H1 (cell line): ENCODE measurements at regions of chr17 and their contacts with region 1.

Region 1: DNA sequence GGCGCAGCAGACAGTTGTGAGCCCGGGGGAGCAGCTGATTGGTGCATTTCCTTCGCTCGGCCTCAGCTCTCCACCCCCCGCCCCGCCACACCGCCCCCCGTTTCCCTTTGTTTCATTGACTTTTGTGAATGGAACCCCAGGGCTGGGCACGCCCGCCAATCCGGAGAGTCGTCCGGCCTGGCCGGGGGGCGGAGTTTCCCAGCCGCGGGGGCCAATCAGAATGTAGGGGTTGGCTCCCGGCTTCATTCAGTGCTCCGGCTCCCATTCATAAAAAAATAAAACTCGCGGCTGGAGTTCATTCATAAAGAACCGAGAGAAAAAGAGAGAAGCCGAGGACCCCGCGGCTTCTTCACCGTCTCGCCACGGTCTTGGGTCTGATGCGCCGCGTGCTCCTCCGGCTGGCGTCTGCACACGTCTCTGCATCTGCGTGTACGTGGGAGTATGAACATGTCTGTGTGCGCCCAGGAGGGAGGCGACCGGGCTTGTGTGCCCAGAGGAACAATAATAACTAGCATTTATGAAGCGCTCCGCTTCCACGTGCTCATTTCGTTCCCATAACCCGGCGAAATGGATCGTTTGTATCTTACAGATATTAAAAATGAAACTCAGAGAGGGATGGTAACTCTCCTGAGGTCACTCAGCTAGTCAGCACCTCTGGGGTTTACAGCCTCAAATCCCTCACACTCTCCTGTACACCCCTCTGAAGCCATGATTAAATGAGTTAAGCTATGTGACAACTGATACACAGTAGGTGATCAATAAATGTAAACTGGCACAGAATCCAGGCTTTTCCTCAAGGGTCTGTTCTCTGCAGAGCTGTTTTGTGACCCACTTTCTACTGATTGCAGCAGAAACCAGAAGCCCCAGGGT is at the start of gene ETV4:
- DNase-seq: peak; percentile 84 to 96
- H3K4me3 ChIP-seq: peak within 1 kb of the TSS; percentile 56 to 71 (median 64)
- H3K27ac ChIP-seq: peak within 1 kb of the TSS; percentile 82; the same call in 1 of the 2 replicates
- H3K4me1 ChIP-seq: peaks cover 24 to 35% (median 30%) of the 10 kb centered on the region in 4 experiments
- H3K27me3 ChIP-seq: peaks cover 0 to 12% (median 7%) of the 10 kb centered on the region in 4 experiments; a peak in 5 of 7 replicates
- CTCF ChIP-seq: no peak
- EP300 ChIP-seq: no peak
- POLR2A ChIP-seq: 0 out of 3 replicates have a peak, but pooled peaks of 1 of the 2 experiments have one; percentile 1
- RAD21 ChIP-seq: no peak
- total RNA-seq, gene ETV4: 137 and 143 TPM in 2 replicates

Region 2: GRCh38 chr17:43477832-43478634 is 68.5 kb before region 1 on chr17:
- CTCF ChIA-PET with region 1: no interaction called
- POLR2A ChIA-PET with region 1: no interaction called
- DNase-seq: no peak
- H3K4me3 ChIP-seq: no peak overlapping the region
- H3K27ac ChIP-seq: no peak overlapping the region
- H3K4me1 ChIP-seq: no peaks in the 10 kb centered on the region; a peak in 2 of 7 replicates
- H3K27me3 ChIP-seq: no peaks in the 10 kb centered on the region
- CTCF ChIP-seq: no peak
- EP300 ChIP-seq: no peak
- POLR2A ChIP-seq: no peak
- RAD21 ChIP-seq: no peak

Region 3: GRCh38 chr17:43517615-43518386 is 28.8 kb before region 1 on chr17:
- CTCF ChIA-PET with region 1: interaction called, 11 read pairs
- POLR2A ChIA-PET with region 1: interaction called, 345 read pairs
- DNase-seq: no peak
- H3K4me3 ChIP-seq: no peak overlapping the region
- H3K27ac ChIP-seq: no peak overlapping the region
- H3K4me1 ChIP-seq: no peaks in the 10 kb centered on the region
- H3K27me3 ChIP-seq: no peaks in the 10 kb centered on the region
- CTCF ChIP-seq: no peak
- EP300 ChIP-seq: no peak
- POLR2A ChIP-seq: no peak
- RAD21 ChIP-seq: no peak

Region 4: DNA sequence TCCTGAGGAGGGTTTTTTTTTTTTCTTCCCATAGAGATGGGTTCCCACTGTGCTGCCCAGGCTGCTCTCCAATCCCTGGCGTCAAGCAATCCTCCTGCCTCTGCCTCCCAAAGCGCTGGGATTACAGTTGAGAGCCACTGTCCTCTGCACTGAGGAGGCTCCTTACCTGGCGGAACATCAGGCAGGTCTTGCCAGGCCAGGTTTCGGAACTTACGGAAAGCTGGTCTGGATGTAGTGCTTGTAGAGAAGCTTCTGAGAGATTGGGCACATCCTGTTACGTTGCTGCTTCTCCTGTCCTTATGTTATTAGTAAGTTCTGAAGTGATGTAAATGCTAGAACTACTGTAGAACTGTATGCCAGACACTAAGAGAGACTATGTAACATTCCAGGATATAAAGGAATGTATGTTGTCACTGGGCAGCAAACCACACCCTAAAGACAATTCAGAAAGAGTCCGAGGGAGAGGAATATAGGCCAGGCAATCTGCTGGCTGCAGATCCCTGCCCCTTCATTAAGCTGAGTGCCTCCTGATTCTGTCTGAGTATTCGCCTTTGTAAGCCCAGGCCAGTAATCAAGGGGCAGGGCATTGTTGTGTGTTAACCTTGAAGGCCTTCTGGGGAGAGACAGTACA is 21.5 kb before region 1 on chr17:
- CTCF ChIA-PET with region 1: interaction called, 11 read pairs
- POLR2A ChIA-PET with region 1: interaction called, 345 read pairs
- DNase-seq: no peak
- H3K4me3 ChIP-seq: no peak overlapping the region
- H3K27ac ChIP-seq: no peak overlapping the region
- H3K4me1 ChIP-seq: peaks cover 11 to 32% (median 16%) of the 10 kb centered on the region in 4 experiments
- H3K27me3 ChIP-seq: no peaks in the 10 kb centered on the region
- CTCF ChIP-seq: no peak
- EP300 ChIP-seq: no peak
- POLR2A ChIP-seq: no peak
- RAD21 ChIP-seq: no peak

Region 5: DNA sequence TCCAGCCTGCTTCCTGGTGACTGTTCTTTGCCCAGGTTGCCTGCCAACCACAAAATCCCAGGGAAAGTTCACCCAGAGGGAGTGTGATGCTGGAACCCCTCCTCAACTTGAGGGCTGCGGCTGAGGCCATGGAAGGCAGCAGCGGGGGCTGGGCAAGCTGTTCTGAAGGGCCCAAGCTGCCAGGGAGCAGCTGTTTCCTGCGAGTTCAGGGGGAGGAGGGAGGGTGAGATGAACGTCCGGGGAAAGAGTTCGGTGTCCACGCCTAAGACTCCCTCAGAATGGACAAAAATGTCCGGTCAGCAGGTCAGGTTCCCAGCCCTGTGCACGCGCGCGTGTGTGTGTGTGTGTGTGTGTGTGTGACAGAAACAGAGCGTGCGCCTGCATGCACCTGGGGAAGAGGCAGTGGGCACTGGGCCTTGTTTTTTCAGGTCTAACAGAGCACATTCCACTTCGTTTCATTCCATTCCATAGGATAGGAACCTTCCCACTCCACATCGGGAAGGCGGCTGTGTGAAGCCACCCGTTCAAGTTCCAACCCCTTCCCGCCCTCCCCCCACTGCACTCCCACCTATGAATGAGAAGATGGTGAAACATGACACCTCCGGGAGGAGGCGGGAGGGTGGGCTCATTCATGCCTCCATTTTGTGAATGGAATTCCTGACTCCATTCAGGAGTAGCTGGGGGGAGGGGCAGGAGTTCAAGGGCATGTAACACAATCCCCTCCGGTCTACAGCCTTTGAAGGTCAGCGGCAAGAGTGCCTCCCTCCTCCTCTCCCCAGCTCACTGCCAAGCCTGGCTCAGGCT is 16.1 kb before region 1 on chr17:
- CTCF ChIA-PET with region 1: interaction called, 14 read pairs
- POLR2A ChIA-PET with region 1: interaction called, 345 read pairs
- DNase-seq: peak; percentile 93 to 99
- H3K4me3 ChIP-seq: peak overlapping the region; percentile 17 to 59 (median 40); a peak in 7 of 8 replicates
- H3K27ac ChIP-seq: peak overlapping the region; percentile 89
- H3K4me1 ChIP-seq: peaks cover 18 to 40% (median 22%) of the 10 kb centered on the region in 4 experiments
- H3K27me3 ChIP-seq: no peaks in the 10 kb centered on the region
- CTCF ChIP-seq: 0 out of 4 replicates have a peak, but pooled peaks of 1 of the 3 experiments have one; percentile 6
- EP300 ChIP-seq: peak in 1 of 2 experiments; percentile 94; a peak in 2 of 3 replicates
- POLR2A ChIP-seq: peak in 1 of 2 experiments; percentile 81; a peak in 2 of 3 replicates
- RAD21 ChIP-seq: peak; percentile 8 to 10; a peak in 1 of 4 replicates

Region 6: GRCh38 chr17:43536236-43536992 is 10.1 kb before region 1 on chr17:
- CTCF ChIA-PET with region 1: interaction called, 14 read pairs
- POLR2A ChIA-PET with region 1: interaction called, 345 read pairs
- DNase-seq: no peak
- H3K4me3 ChIP-seq: no peak overlapping the region
- H3K27ac ChIP-seq: no peak overlapping the region
- H3K4me1 ChIP-seq: peaks cover 11 to 26% (median 12%) of the 10 kb centered on the region in 4 experiments
- H3K27me3 ChIP-seq: no peaks in the 10 kb centered on the region
- CTCF ChIP-seq: no peak
- EP300 ChIP-seq: no peak
- POLR2A ChIP-seq: no peak
- RAD21 ChIP-seq: no peak

Region 7: DNA sequence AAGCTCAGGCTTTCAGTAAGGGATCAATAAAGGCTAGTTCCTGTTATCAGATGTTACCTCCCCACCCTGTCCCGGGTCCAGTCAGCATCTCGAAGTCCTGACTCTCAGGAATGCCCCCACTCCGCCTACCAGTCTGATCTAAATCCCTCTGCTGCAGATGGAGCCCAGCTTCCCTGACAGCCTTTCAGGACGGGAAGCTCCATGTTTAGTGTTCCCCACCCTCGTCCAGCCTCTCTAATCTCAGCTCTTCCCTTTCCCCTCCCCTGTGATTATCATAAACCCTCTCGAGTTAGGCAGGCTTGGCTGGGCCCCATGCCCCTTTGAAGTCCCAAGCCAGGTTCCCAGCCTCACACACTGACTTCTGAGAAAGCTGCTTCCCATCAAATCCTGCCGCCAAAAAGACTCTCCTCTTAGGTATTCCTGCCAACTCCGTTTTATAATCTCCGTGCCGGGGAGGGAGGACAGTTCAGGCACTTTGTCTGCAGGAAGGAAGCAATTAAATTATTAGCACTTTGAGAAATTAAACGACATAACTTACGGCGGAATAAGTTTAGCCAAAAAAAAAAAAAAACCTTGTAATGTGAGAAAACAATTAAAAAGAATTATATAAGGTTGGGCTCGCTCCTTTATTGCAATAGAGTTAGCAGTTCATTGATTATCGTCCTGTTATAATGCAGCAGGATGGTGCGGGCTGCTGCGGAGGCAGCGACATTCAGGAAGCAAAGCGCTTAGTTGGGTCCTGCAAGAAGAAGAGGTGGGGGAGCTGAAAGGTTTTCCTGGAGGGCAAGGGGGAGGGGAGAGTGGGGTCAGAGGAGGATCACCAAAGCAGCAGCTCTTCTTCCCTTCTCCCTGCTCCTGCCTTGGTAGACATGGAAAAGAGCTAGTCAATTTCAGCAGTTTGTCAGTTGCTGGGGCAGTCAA is 16.4 kb after region 1 on chr17:
- CTCF ChIA-PET with region 1: interaction called, 6 read pairs
- POLR2A ChIA-PET with region 1: interaction called, 36 read pairs
- DNase-seq: no peak
- H3K4me3 ChIP-seq: peak overlapping the region in 2 of 4 experiments; percentile 14 to 43; a peak in 3 of 8 replicates
- H3K27ac ChIP-seq: no peak overlapping the region
- H3K4me1 ChIP-seq: peaks cover 13 to 24% (median 20%) of the 10 kb centered on the region in 4 experiments
- H3K27me3 ChIP-seq: peaks cover 0 to 3% (median 1%) of the 10 kb centered on the region in 4 experiments; a peak in 3 of 7 replicates
- CTCF ChIP-seq: no peak
- EP300 ChIP-seq: no peak
- POLR2A ChIP-seq: no peak
- RAD21 ChIP-seq: no peak